Activated CD4-positive, alpha-beta memory T cell treated with anti-CD3 and anti-CD28 coated beads, Interleukin-2, amount 10 ng/mL, durations not matched to agents 7 days and 5 days (primary cell): ENCODE measurements at regions of chr13 and their contacts with region 1.

Region 1: DNA sequence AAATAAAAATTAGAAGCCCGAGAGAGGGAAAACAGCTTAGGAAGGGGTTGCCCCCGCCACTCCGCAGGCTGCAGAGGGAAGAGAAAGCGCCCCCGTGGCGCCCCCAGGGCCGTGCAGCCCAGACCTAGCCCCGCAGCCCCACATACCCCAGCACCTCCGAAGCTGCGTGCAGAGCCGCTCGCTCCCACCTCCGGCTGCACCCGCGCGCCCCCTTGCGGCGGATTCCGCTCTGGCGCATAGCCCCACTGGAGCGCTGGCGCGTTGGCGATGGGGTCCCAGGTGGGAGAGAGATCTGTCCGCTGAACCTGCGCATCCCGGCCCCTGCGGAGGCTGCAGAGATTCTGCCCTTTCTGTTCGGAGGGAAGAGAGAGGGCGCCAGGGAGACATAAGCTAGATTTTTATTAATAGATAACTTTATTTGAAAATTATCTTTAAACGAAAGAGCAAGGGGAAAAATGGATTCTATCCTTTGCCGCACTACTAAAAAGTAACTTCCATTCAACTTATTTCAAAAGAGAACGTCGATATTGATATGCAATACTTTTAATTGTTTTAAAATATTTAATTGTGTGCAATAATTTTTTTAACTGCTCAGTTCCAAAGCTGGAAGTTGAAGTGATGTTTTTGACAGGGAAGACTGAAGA is 11.7 kb upstream of the CLN5 start:
- DNase-seq: peak; percentile 82
- H3K4me3 Mint-ChIP-seq: no peak overlapping the region
- H3K27ac Mint-ChIP-seq: no peak overlapping the region
- H3K4me1 Mint-ChIP-seq: peaks cover 13% of the 10 kb centered on the region
- H3K27me3 Mint-ChIP-seq: peaks cover 50% of the 10 kb centered on the region

Region 2: DNA sequence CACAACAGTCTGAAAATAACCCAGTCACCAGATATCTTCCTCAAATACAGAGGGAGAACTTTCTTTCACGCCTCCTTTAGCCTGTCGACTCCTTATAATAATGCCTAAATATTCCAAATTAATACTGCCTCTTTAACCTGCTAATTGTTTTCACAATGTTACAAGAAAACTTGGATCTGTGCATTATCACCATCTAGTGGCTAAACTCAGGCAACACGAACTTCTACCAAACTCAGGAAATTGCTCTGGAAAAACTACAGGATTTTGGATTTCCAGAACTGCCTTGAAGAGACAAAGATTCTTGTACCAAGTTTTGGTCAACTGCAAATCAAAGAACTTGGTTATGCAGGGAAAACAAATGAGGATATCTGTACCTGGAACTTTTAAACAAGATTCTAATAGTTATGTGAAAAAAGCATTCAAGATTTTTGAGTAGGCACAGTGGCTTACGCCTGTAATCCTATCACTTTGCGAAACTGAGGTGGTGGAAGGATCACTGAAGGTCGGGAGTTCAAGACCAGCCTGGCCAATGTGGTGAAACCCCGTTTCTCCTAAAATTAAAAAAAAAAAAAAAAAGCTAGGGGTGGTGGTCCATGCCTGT is 22.5 kb after region 1 on chr13:
- CTCF ChIA-PET with region 1: interaction called, 19 read pairs
- POLR2A ChIA-PET with region 1: no interaction called
- DNase-seq: no peak
- H3K4me3 Mint-ChIP-seq: no peak overlapping the region
- H3K27ac Mint-ChIP-seq: no peak overlapping the region
- H3K4me1 Mint-ChIP-seq: peaks cover 19% of the 10 kb centered on the region
- H3K27me3 Mint-ChIP-seq: no peaks in the 10 kb centered on the region